ENCODE measurements at regions of chr7 and their contacts with region 1.

Region 1: DNA sequence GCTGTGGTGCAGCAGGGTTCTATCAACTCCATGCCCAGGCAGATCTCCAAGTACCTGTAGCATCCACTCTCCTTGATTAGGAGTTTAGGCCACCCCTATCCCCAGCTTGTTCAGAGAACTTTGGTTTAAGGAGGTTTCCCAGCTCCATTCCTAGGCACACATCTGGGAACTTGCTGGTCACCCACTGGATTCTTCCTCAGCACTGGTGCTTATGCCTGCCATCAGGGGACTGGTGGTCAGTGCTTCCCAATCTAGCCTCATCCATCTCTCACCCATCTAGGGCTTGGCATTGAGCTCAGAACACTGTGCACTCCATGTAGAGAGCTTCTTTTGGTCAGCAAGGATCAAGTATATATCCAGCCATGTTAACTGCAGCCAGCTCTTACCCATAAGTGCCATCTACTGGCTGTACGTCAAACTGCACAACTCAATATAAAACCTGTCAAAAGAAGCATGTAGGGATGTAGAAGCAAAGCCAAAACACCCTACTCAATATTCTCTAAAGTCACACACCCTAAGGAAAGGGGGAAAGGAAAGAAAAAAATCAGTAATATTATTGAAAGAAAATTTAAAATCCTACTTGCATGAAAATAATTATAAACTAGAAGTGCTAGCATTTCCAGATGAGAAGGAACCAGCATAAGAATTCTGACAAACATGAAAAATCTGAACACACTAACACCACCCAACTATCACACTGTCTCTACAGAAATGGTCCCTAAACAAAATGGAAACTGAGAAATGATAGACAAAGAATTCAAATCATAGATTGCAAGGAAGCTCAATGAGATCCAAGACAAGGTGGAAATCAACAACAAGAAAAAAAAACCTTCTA is 531.2 kb upstream of the STEAP1 start:
- DNase-seq: peak in 1 of 2 experiments; percentile 12
- H3K4me3 ChIP-seq: no peak overlapping the region
- H3K27ac ChIP-seq: no peak overlapping the region
- H3K4me1 ChIP-seq: no peaks in the 10 kb centered on the region
- H3K27me3 ChIP-seq: no peaks in the 10 kb centered on the region
- CTCF ChIP-seq: peak; percentile 75

Region 2: GRCh38 chr7:88363869-88364268 is 1259.2 kb before region 1 on chr7:
- CTCF ChIA-PET with region 1: no interaction called
- POLR2A ChIA-PET with region 1: no interaction called
- intact Hi-C with region 1: no loop called
- DNase-seq: no peak
- H3K4me3 ChIP-seq: no peak overlapping the region
- H3K27ac ChIP-seq: no peak overlapping the region
- H3K4me1 ChIP-seq: no peaks in the 10 kb centered on the region
- H3K27me3 ChIP-seq: no peaks in the 10 kb centered on the region
- CTCF ChIP-seq: no peak

Region 3: GRCh38 chr7:88789480-88790064 is 833.5 kb before region 1 on chr7:
- CTCF ChIA-PET with region 1: no interaction called
- POLR2A ChIA-PET with region 1: no interaction called
- intact Hi-C with region 1: loop called (anchors 1 kb)
- DNase-seq: no peak
- H3K4me3 ChIP-seq: no peak overlapping the region
- H3K27ac ChIP-seq: no peak overlapping the region
- H3K4me1 ChIP-seq: no peaks in the 10 kb centered on the region
- H3K27me3 ChIP-seq: no peaks in the 10 kb centered on the region
- CTCF ChIP-seq: peak; percentile 74

Region 4: GRCh38 chr7:89104748-89105685 is 518.0 kb before region 1 on chr7:
- CTCF ChIA-PET with region 1: no interaction called
- POLR2A ChIA-PET with region 1: no interaction called
- intact Hi-C with region 1: no loop called
- DNase-seq: no peak
- H3K4me3 ChIP-seq: no peak overlapping the region
- H3K27ac ChIP-seq: no peak overlapping the region
- H3K4me1 ChIP-seq: no peaks in the 10 kb centered on the region
- H3K27me3 ChIP-seq: no peaks in the 10 kb centered on the region
- CTCF ChIP-seq: no peak

Region 5: DNA sequence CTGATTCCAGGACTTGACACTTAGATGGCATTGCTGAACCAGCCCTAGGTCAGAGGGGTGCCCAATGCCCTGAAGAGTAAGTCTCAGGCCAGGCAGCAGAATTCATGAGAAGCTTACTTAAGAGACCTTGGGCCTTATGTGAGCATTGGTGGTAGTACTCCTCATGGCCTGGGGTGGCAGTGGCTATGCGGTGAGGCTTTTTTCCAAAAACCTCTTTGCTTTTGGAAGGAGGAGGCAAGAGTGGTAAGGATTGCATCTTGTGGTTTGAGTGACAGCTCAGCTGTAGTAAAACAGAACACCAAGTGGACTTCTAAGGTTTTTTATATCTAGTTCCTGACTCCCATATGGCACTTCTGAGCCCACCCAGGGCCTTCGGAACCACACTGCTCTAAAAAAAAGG is 72.2 kb after region 1 on chr7:
- CTCF ChIA-PET with region 1: no interaction called
- POLR2A ChIA-PET with region 1: no interaction called
- intact Hi-C with region 1: no loop called
- DNase-seq: no peak
- H3K4me3 ChIP-seq: no peak overlapping the region
- H3K27ac ChIP-seq: no peak overlapping the region
- H3K4me1 ChIP-seq: no peaks in the 10 kb centered on the region
- H3K27me3 ChIP-seq: no peaks in the 10 kb centered on the region
- CTCF ChIP-seq: no peak

Measured in PC-9 (cell line).